Right lobe of liver (tissue), 6 donors: ENCODE measurements at regions of chr5 and their contacts with region 1.

Region 1: DNA sequence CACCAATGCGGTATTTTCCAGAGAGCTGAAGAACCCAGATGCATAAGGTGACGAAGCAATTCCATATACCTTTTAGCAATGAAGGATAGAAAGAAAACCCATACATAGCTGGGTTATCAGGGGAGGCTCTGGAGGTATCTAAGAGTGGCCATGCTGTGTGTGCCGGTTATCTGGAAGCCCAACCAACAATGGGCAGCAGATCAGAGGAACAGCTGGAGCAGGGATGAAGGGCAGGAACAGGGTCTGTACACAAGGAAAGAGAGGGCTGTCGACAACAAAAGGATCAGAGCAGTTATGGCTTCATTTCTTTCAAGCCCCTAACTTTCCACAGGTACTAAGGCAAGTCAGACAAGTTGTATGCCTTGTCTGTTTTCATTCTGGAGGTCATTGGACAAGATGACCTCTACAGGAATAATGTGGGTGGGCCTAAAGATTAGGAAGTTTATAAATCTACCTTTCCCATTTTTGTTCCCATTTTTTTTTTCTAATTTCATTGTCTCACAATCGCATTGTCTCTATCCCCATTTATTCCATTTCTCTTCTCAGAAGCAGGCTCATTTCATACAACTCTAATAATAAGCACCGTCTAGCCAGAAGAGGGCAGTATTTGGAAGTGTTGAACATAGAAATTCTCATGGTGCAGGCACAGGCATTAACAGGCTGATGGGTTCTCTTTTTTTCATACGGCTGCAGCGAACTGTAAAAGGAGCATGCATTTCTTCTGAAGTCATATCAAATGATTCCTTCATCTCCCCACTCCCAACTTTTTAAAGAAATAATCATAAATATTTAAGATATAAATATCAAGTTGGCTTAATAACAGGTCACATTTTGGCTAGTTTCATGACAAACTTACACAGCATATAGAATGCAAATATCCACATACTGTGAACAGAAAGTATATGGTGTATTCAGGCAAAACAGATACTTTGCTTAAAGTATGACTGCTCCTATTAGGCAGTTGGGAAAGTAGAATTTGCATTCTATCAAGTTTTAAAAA is 63.5 kb downstream of the ZNF474 start:
- DNase-seq: no peak
- ATAC-seq: peak; percentile 81 to 87 (median 84)
- H3K4me3 ChIP-seq: no peak overlapping the region
- H3K27ac ChIP-seq: no peak overlapping the region
- H3K4me1 ChIP-seq: no peaks in the 10 kb centered on the region
- H3K27me3 ChIP-seq: no peaks in the 10 kb centered on the region
- CTCF ChIP-seq: peak; percentile 51 to 62 (median 54)
- POLR2A ChIP-seq: no peak

Region 2: DNA sequence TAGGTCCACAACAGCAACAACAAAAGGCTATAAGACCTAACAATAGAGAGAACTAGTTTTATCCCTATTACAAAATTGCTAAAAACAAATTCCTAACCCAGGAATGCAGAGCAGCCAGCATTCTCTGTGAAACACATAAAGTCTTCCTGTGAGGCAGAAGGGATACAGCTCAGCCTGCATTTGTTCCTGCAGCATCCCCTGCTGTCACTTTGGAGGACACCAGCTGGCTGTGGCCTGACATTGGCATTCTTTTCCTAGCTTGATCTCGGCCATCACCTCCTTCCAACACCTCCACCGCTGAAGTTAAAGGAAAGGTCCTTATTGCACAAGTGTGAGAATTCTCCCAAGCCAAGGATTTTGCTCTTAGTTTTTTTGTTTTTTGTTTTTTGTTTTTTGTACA is 305.4 kb after region 1 on chr5:
- intact Hi-C with region 1: loop called in 1 of 2 experiments (anchors 10 kb)
- DNase-seq: no peak
- ATAC-seq: peak; percentile 39 to 72 (median 60)
- H3K4me3 ChIP-seq: no peak overlapping the region
- H3K27ac ChIP-seq: no peak overlapping the region
- H3K4me1 ChIP-seq: no peaks in the 10 kb centered on the region
- H3K27me3 ChIP-seq: no peaks in the 10 kb centered on the region
- CTCF ChIP-seq: peak; percentile 29 to 55 (median 42)
- POLR2A ChIP-seq: no peak